ENCODE measurements at regions of chrX and their contacts with region 1.

Region 1: DNA sequence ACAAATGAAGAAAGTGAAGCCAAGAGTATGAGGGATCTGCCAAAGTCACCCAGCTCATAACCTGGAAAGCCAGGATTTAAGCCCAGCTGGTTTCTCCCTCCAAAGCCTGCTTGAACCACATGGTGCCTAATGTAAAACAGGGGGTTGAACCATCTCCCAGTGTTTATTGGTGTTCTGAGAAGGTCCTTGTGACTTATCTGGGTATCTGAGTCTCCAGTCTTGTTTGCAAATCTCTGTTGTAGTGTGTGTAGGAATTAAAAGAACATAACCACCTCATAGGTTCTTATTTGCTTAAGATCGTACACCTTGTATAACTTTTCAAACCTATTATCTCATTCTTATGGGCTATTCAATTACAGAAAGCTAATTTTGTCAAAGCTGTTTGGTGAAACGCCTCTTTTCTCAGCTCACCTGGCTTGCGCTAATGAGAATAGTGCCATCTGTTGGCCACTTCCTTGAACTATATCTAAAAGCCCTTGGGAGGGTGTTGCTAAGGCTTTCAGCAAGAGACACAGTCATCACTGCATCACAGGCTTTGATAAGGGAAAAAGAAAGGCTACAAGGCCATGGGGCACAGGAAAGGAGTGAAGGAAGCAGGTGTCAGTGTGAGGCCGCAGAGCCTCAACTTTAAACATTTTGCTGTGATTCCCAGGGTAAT is 34.0 kb downstream of the ETDB start:
- DNase-seq: peak; percentile 28
- H3K4me3 ChIP-seq: no peak overlapping the region
- H3K27ac ChIP-seq: no peak overlapping the region
- H3K4me1 ChIP-seq: no peaks in the 10 kb centered on the region
- H3K27me3 ChIP-seq: no peaks in the 10 kb centered on the region
- CTCF ChIP-seq: peak in 3 of 4 experiments; percentile 33 to 51 (median 37)
- POLR2A ChIP-seq: no peak

Region 2: GRCh38 chrX:134880866-134881265 is 205.5 kb before region 1 on chrX:
- intact Hi-C with region 1: no loop called
- DNase-seq: no peak
- H3K4me3 ChIP-seq: no peak overlapping the region
- H3K27ac ChIP-seq: no peak overlapping the region
- H3K4me1 ChIP-seq: no peaks in the 10 kb centered on the region
- H3K27me3 ChIP-seq: no peaks in the 10 kb centered on the region
- CTCF ChIP-seq: no peak
- POLR2A ChIP-seq: no peak

Region 3: GRCh38 chrX:134969726-134970125 is 116.6 kb before region 1 on chrX:
- intact Hi-C with region 1: loop called (anchors 5 kb)
- DNase-seq: no peak
- H3K4me3 ChIP-seq: no peak overlapping the region
- H3K27ac ChIP-seq: no peak overlapping the region
- H3K4me1 ChIP-seq: no peaks in the 10 kb centered on the region
- H3K27me3 ChIP-seq: no peaks in the 10 kb centered on the region
- CTCF ChIP-seq: no peak
- POLR2A ChIP-seq: no peak

Region 4: DNA sequence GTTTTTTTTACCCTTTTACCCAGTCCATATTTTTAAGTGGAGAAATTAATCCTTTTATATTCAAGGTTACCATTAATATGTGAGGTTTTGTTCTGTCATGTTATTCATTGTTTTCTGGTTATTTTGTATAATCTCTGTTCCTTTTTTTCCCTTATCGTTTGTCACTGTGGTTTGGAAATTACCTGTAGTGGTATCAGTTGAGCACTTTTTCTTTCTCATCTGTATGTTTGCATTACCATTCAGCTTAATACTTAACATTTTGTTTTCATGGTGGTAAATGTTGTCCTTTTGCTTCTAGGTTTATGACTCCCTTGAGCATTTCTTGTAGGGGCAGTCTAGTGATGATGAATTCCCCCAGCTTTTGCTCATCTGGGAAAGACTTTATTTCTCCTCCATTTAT is 229.5 kb after region 1 on chrX:
- intact Hi-C with region 1: no loop called
- DNase-seq: no peak
- H3K4me3 ChIP-seq: no peak overlapping the region
- H3K27ac ChIP-seq: no peak overlapping the region
- H3K4me1 ChIP-seq: no peaks in the 10 kb centered on the region
- H3K27me3 ChIP-seq: no peaks in the 10 kb centered on the region
- CTCF ChIP-seq: no peak
- POLR2A ChIP-seq: no peak